ENCODE measurements at regions of chr1 and their contacts with region 1.

Region 1: GRCh38 chr1:103958699-103959098 is 209.0 kb downstream of the AMY1C start:
- DNase-seq: no peak
- ATAC-seq: no peak
- H3K4me3 ChIP-seq: no peak overlapping the region
- H3K27ac ChIP-seq: no peak overlapping the region
- H3K4me1 ChIP-seq: no peaks in the 10 kb centered on the region
- H3K27me3 ChIP-seq: no peaks in the 10 kb centered on the region
- CTCF ChIP-seq: no peak

Region 2: GRCh38 chr1:103761896-103762295 is 196.8 kb before region 1 on chr1:
- CTCF ChIA-PET with region 1: no interaction called
- POLR2A ChIA-PET with region 1: no interaction called
- in situ Hi-C with region 1: no loop called
- intact Hi-C with region 1: no loop called
- DNase-seq: no peak
- ATAC-seq: no peak
- H3K4me3 ChIP-seq: no peak overlapping the region
- H3K27ac ChIP-seq: no peak overlapping the region
- H3K4me1 ChIP-seq: no peaks in the 10 kb centered on the region
- H3K27me3 ChIP-seq: no peaks in the 10 kb centered on the region
- CTCF ChIP-seq: no peak

Region 3: DNA sequence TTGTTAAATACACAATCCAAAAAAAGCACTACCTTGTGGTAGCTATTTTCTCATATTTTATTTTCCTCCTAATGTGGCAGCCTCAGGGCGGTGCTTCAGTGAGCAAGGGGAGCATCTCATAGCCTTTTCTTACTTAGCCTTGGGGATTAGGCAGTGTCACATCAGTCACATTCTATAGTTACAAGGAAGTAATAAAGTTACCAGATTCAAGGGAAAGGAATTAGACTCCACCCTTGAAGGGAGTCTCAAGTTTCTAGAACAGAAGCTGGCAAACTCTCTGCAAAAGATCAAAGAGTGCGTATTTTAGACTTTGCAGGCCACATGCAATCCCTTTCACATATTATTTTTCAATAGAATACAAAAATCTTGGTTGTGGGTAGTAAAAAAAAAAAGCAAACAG is 141.4 kb after region 1 on chr1:
- CTCF ChIA-PET with region 1: no interaction called
- POLR2A ChIA-PET with region 1: no interaction called
- in situ Hi-C with region 1: no loop called
- intact Hi-C with region 1: no loop called
- DNase-seq: no peak
- ATAC-seq: no peak
- H3K4me3 ChIP-seq: no peak overlapping the region
- H3K27ac ChIP-seq: no peak overlapping the region
- H3K4me1 ChIP-seq: no peaks in the 10 kb centered on the region
- H3K27me3 ChIP-seq: no peaks in the 10 kb centered on the region
- CTCF ChIP-seq: no peak

Region 4: GRCh38 chr1:104266612-104267011 is 307.9 kb after region 1 on chr1:
- CTCF ChIA-PET with region 1: no interaction called
- POLR2A ChIA-PET with region 1: no interaction called
- in situ Hi-C with region 1: no loop called
- intact Hi-C with region 1: loop called (anchors 10 kb)
- DNase-seq: no peak
- ATAC-seq: no peak
- H3K4me3 ChIP-seq: no peak overlapping the region
- H3K27ac ChIP-seq: no peak overlapping the region
- H3K4me1 ChIP-seq: no peaks in the 10 kb centered on the region
- H3K27me3 ChIP-seq: no peaks in the 10 kb centered on the region
- CTCF ChIP-seq: no peak

Region 5: GRCh38 chr1:105326883-105327282 is 1368.2 kb after region 1 on chr1:
- CTCF ChIA-PET with region 1: no interaction called
- POLR2A ChIA-PET with region 1: no interaction called
- in situ Hi-C with region 1: no loop called
- intact Hi-C with region 1: no loop called
- DNase-seq: no peak
- ATAC-seq: no peak
- H3K4me3 ChIP-seq: no peak overlapping the region
- H3K27ac ChIP-seq: no peak overlapping the region
- H3K4me1 ChIP-seq: no peaks in the 10 kb centered on the region
- H3K27me3 ChIP-seq: no peaks in the 10 kb centered on the region
- CTCF ChIP-seq: no peak

Measured in Panc1 (cell line).